Mammary epithelial cell (primary cell): ENCODE measurements at regions of chr6 and their contacts with region 1.

Region 1: GRCh38 chr6:137944793-137945498 is 77.9 kb downstream of the TNFAIP3 start:
- DNase-seq: peak; percentile 34
- H3K4me3 ChIP-seq: no peak overlapping the region
- H3K27ac ChIP-seq: no peak overlapping the region
- H3K4me1 ChIP-seq: peaks cover 12% of the 10 kb centered on the region
- H3K27me3 ChIP-seq: no peaks in the 10 kb centered on the region
- CTCF ChIP-seq: peak; percentile 68 to 81

Region 2: GRCh38 chr6:137697267-137697938 is 247.5 kb before region 1 on chr6:
- CTCF ChIA-PET with region 1: no interaction called
- dilution Hi-C with region 1: loop called (anchors 5 kb)
- in situ Hi-C with region 1: loop called in 1 of 2 experiments (anchors 5 kb)
- intact Hi-C with region 1: no loop called
- DNase-seq: peak; percentile 63
- H3K4me3 ChIP-seq: no peak overlapping the region
- H3K27ac ChIP-seq: no peak overlapping the region
- H3K4me1 ChIP-seq: peaks cover 20% of the 10 kb centered on the region
- H3K27me3 ChIP-seq: no peaks in the 10 kb centered on the region
- CTCF ChIP-seq: no peak

Region 3: GRCh38 chr6:137799950-137800568 is 144.9 kb before region 1 on chr6:
- CTCF ChIA-PET with region 1: no interaction called
- dilution Hi-C with region 1: no loop called
- in situ Hi-C with region 1: loop called in 1 of 2 experiments (anchors 10 kb)
- intact Hi-C with region 1: loop called (anchors 1 kb)
- DNase-seq: peak; percentile 72
- H3K4me3 ChIP-seq: no peak overlapping the region
- H3K27ac ChIP-seq: no peak overlapping the region
- H3K4me1 ChIP-seq: no peaks in the 10 kb centered on the region
- H3K27me3 ChIP-seq: no peaks in the 10 kb centered on the region
- CTCF ChIP-seq: peak; percentile 71 to 73

Region 4: DNA sequence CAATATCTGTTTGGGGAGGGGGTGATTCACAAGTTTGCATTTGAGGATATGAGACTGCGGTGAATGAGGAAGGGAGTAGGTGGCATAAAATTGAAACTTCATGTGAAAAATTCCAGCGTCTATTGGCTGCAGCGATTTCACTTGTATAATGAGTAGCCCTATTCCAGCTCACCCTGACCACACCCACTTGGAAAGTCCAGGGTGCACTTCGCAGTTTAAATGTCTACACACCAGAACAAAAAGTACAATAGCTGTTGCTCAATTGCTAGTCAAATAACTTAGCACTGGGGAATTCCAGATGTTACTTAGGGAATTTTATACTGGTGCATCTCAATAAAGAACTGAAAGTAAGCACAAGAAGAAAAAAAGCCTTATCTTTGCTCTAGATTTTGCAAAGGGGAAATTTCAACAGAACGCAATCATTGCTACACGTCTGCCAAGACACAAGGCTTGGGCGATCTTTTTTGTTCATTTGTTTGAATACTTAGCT is 71.6 kb before region 1 on chr6:
- CTCF ChIA-PET with region 1: interaction called, 6 read pairs
- dilution Hi-C with region 1: no loop called
- in situ Hi-C with region 1: loop called (anchors 5 kb)
- intact Hi-C with region 1: loop called (anchors 1 kb)
- DNase-seq: peak; percentile 96
- H3K4me3 ChIP-seq: peak overlapping the region; percentile 12 to 32 (median 18)
- H3K27ac ChIP-seq: peak overlapping the region; percentile 95
- H3K4me1 ChIP-seq: peaks cover 52% of the 10 kb centered on the region
- H3K27me3 ChIP-seq: no peaks in the 10 kb centered on the region
- CTCF ChIP-seq: no peak

Region 5: GRCh38 chr6:137975188-137975940 is 30.4 kb after region 1 on chr6:
- CTCF ChIA-PET with region 1: no interaction called
- dilution Hi-C with region 1: no loop called
- in situ Hi-C with region 1: no loop called
- intact Hi-C with region 1: loop called (anchors 2 kb)
- DNase-seq: no peak
- H3K4me3 ChIP-seq: no peak overlapping the region
- H3K27ac ChIP-seq: no peak overlapping the region
- H3K4me1 ChIP-seq: peaks cover 4% of the 10 kb centered on the region
- H3K27me3 ChIP-seq: no peaks in the 10 kb centered on the region
- CTCF ChIP-seq: peak; percentile 31 to 43